B cell (primary cell): ENCODE measurements at regions of chr7 and their contacts with region 1.

Region 1: GRCh38 chr7:116588641-116589594 is 64.1 kb downstream of the CAV1 start:
- DNase-seq: peak; percentile 66
- ATAC-seq: peak; percentile 60
- H3K4me3 ChIP-seq: no peak overlapping the region
- H3K4me3 Mint-ChIP-seq: no peak overlapping the region
- H3K27ac ChIP-seq: no peak overlapping the region
- H3K27ac Mint-ChIP-seq: no peak overlapping the region
- H3K4me1 ChIP-seq: peaks cover 12 to 19% of the 10 kb centered on the region in 2 donors
- H3K4me1 Mint-ChIP-seq: peaks cover 19% of the 10 kb centered on the region
- H3K27me3 ChIP-seq: peaks cover 0 to 18% (median 16%) of the 10 kb centered on the region in 4 experiments
- H3K27me3 Mint-ChIP-seq: peaks cover 19% of the 10 kb centered on the region
- CTCF ChIP-seq: peak; percentile 91

Region 2: GRCh38 chr7:116138202-116138801 is 450.6 kb before region 1 on chr7:
- CTCF ChIA-PET with region 1: interaction called, 21 read pairs
- POLR2A ChIA-PET with region 1: no interaction called
- intact Hi-C with region 1: loop called (anchors 1 kb)
- DNase-seq: peak; percentile 74
- ATAC-seq: peak; percentile 85
- H3K4me3 ChIP-seq: no peak overlapping the region
- H3K4me3 Mint-ChIP-seq: no peak overlapping the region
- H3K27ac ChIP-seq: no peak overlapping the region
- H3K27ac Mint-ChIP-seq: no peak overlapping the region
- H3K4me1 ChIP-seq: peaks cover 6 to 7% of the 10 kb centered on the region in 2 donors
- H3K4me1 Mint-ChIP-seq: peaks cover 23% of the 10 kb centered on the region
- H3K27me3 ChIP-seq: no peaks in the 10 kb centered on the region
- H3K27me3 Mint-ChIP-seq: no peaks in the 10 kb centered on the region
- CTCF ChIP-seq: peak; percentile 89

Region 3: DNA sequence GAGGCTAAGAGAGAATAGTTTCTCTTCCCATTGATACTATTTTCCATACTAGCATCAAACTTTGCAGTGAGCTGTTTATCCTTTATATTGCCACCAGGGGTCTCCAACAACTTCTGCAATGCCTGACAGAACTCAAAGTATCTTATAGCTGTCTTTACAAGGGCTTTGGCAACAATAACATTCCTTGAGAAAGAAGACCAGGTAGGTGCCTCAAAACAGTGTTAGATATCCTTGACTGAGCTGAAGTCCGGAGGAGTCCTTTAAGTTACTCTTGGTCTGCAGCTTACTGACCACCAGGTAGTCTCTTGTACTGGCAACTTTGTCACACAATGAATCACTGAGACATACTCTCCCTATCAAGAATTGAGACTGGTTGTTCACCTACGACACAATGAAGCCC is 408.6 kb before region 1 on chr7:
- CTCF ChIA-PET with region 1: interaction called, 26 read pairs
- POLR2A ChIA-PET with region 1: no interaction called
- intact Hi-C with region 1: no loop called
- DNase-seq: peak; percentile 73
- ATAC-seq: peak; percentile 80
- H3K4me3 ChIP-seq: no peak overlapping the region
- H3K4me3 Mint-ChIP-seq: no peak overlapping the region
- H3K27ac ChIP-seq: no peak overlapping the region
- H3K27ac Mint-ChIP-seq: no peak overlapping the region
- H3K4me1 ChIP-seq: no peaks in the 10 kb centered on the region
- H3K4me1 Mint-ChIP-seq: no peaks in the 10 kb centered on the region
- H3K27me3 ChIP-seq: no peaks in the 10 kb centered on the region
- H3K27me3 Mint-ChIP-seq: no peaks in the 10 kb centered on the region
- CTCF ChIP-seq: peak; percentile 85

Region 4: DNA sequence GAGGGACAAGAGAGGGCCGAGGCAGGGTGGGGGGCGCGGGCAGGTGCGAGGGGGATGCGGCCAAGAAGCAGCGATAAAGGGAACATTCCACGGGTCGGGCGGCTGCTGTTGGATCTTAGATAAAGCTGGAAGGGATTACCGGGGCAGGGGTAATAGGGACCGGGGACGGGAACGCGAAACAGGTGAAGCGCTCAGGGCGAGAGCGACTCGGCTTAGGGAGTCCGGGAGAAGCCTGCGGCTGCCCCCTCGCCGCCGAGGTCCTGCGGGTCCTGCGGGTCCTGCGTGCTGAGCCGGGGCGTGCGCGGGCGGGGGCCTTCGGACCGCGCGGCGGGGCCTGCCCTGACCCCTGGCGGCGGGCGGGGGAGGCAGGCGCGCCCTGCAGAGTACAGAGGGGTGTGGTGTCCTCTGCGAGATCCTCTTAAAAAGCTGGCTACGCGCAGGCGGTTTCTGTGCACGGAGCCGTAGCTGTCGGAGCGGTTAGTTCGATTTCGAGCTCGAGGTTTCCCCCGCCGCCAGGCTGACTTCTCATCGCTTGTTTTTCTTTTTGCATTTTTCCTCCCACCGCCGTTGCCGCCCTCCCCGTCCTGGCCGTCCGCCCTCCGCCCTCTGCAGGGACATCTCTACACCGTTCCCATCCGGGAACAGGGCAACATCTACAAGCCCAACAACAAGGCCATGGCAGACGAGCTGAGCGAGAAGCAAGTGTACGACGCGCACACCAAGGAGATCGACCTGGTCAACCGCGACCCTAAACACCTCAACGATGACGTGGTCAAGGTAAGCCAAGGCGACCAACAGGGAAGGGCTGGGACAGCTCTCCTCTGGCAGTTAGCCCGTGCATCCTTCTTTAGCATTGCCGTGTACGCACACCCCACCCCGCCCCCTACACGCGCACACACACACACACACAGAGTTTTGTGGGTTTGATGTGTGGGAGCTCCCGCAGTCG is 62.7 kb before region 1 on chr7:
- CTCF ChIA-PET with region 1: interaction called, 29 read pairs
- POLR2A ChIA-PET with region 1: no interaction called
- intact Hi-C with region 1: loop called (anchors 2 kb)
- DNase-seq: peak; percentile 83
- ATAC-seq: peak; percentile 92
- H3K4me3 ChIP-seq: peak overlapping the region; percentile 3 to 84 (median 73)
- H3K4me3 Mint-ChIP-seq: peak overlapping the region; percentile 96
- H3K27ac ChIP-seq: no peak overlapping the region
- H3K27ac Mint-ChIP-seq: peak overlapping the region; percentile 65
- H3K4me1 ChIP-seq: peaks cover 12 to 27% of the 10 kb centered on the region in 2 donors
- H3K4me1 Mint-ChIP-seq: peaks cover 26% of the 10 kb centered on the region
- H3K27me3 ChIP-seq: peaks cover 0 to 42% (median 28%) of the 10 kb centered on the region in 4 experiments
- H3K27me3 Mint-ChIP-seq: peaks cover 46% of the 10 kb centered on the region
- CTCF ChIP-seq: peak; percentile 87

Region 5: GRCh38 chr7:116548506-116548905 is 40.4 kb before region 1 on chr7:
- CTCF ChIA-PET with region 1: no interaction called
- POLR2A ChIA-PET with region 1: no interaction called
- intact Hi-C with region 1: no loop called
- DNase-seq: peak; percentile 20
- ATAC-seq: peak; percentile 45
- H3K4me3 ChIP-seq: no peak overlapping the region
- H3K4me3 Mint-ChIP-seq: no peak overlapping the region
- H3K27ac ChIP-seq: no peak overlapping the region
- H3K27ac Mint-ChIP-seq: no peak overlapping the region
- H3K4me1 ChIP-seq: peaks cover 6 to 7% of the 10 kb centered on the region in 2 donors
- H3K4me1 Mint-ChIP-seq: peaks cover 6% of the 10 kb centered on the region
- H3K27me3 ChIP-seq: no peaks in the 10 kb centered on the region
- H3K27me3 Mint-ChIP-seq: peaks cover 9% of the 10 kb centered on the region
- CTCF ChIP-seq: no peak

Region 6: DNA sequence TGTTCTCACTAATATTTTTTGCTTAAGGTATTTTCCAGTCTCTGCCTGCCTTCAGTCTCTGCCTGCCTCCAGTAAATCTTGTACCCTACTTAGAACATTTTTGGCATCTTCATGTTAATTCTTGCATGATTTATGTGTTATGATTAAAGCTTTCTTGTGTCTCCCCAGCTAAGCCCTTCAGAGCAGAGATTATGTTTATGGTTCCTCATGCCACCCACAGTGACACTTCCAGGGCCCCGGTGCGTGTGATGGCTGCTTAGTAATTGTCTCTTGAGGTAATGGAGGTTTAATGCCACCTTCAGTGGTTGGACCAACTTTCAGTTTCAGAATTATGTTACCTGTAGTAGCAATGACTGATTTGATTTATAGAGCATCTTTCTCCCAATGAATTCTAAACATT is 12.5 kb after region 1 on chr7:
- CTCF ChIA-PET with region 1: interaction called, 32 read pairs
- POLR2A ChIA-PET with region 1: no interaction called
- intact Hi-C with region 1: no loop called
- DNase-seq: no peak
- ATAC-seq: no peak
- H3K4me3 ChIP-seq: no peak overlapping the region
- H3K4me3 Mint-ChIP-seq: no peak overlapping the region
- H3K27ac ChIP-seq: no peak overlapping the region
- H3K27ac Mint-ChIP-seq: no peak overlapping the region
- H3K4me1 ChIP-seq: no peaks in the 10 kb centered on the region
- H3K4me1 Mint-ChIP-seq: no peaks in the 10 kb centered on the region
- H3K27me3 ChIP-seq: peaks cover 0 to 2% (median under 1%) of the 10 kb centered on the region in 4 experiments
- H3K27me3 Mint-ChIP-seq: peaks cover 10% of the 10 kb centered on the region
- CTCF ChIP-seq: no peak

Region 7: GRCh38 chr7:116780940-116781339 is 192.0 kb after region 1 on chr7:
- CTCF ChIA-PET with region 1: interaction called, 71 read pairs
- POLR2A ChIA-PET with region 1: no interaction called
- intact Hi-C with region 1: loop called (anchors 1 kb)
- DNase-seq: no peak
- ATAC-seq: no peak
- H3K4me3 ChIP-seq: no peak overlapping the region
- H3K4me3 Mint-ChIP-seq: no peak overlapping the region
- H3K27ac ChIP-seq: no peak overlapping the region
- H3K27ac Mint-ChIP-seq: no peak overlapping the region
- H3K4me1 ChIP-seq: no peaks in the 10 kb centered on the region
- H3K4me1 Mint-ChIP-seq: no peaks in the 10 kb centered on the region
- H3K27me3 ChIP-seq: no peaks in the 10 kb centered on the region
- H3K27me3 Mint-ChIP-seq: no peaks in the 10 kb centered on the region
- CTCF ChIP-seq: no peak

Region 8: GRCh38 chr7:116809636-116810266 is 220.8 kb after region 1 on chr7:
- CTCF ChIA-PET with region 1: interaction called, 97 read pairs
- POLR2A ChIA-PET with region 1: no interaction called
- intact Hi-C with region 1: loop called (anchors 1 kb)
- DNase-seq: peak; percentile 65
- ATAC-seq: peak; percentile 41
- H3K4me3 ChIP-seq: no peak overlapping the region
- H3K4me3 Mint-ChIP-seq: no peak overlapping the region
- H3K27ac ChIP-seq: no peak overlapping the region
- H3K27ac Mint-ChIP-seq: no peak overlapping the region
- H3K4me1 ChIP-seq: no peaks in the 10 kb centered on the region
- H3K4me1 Mint-ChIP-seq: no peaks in the 10 kb centered on the region
- H3K27me3 ChIP-seq: peaks cover 0 to 4% (median 0%) of the 10 kb centered on the region in 4 experiments
- H3K27me3 Mint-ChIP-seq: peaks cover 8% of the 10 kb centered on the region
- CTCF ChIP-seq: peak; percentile 75